Psoas muscle (tissue), 8 donors: ENCODE measurements at regions of chr7 and their contacts with region 1.

Region 1: GRCh38 chr7:124042816-124043215 is 9.9 kb upstream of the TMEM229A start:
- DNase-seq: no peak
- ATAC-seq: no peak
- H3K4me3 ChIP-seq: no peak overlapping the region
- H3K27ac ChIP-seq: no peak overlapping the region
- H3K4me1 ChIP-seq: no peaks in the 10 kb centered on the region
- H3K27me3 ChIP-seq: peaks cover 0 to 3% (median 0%) of the 10 kb centered on the region in 3 donors
- CTCF ChIP-seq: no peak

Region 2: DNA sequence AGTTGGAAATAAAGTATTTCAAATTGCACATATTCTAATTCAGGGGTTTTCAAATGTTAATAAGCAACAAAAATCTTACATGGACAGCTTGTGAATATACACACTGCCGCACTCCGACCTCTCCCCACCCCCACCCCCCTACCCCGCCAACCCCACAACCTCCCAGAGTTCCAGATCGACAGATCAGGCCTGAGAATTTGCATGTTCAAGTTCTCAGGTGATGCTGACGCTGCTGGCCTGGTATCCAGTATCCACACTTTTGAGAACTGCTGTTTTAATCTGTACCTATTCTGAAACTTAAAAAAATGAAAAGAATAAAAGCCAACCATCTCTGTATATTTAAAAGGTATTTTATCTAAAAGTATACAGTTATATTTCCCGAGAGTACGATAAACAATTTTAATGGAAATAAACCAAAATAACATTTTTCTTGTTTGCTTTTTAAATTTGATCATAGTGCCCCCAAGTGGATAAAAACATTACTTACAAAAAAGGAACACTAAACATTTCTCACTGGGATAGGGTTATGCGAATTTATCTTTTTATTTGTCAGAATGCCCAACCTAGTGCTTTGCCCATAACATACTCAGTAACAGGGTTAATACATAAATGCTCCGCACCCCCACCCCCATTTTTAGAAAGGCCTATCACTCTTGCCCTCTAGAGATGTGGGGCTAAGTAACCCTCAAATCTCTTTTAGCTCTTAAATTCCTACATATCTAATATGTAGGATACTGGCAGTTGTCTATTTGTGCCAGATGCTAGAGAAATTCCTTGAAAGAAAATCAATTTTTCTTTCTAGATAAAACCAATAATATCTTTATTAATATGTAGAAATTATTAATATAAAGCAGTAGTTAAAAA is 1510.2 kb before region 1 on chr7:
- intact Hi-C with region 1: no loop called
- DNase-seq: no peak
- ATAC-seq: no peak
- H3K4me3 ChIP-seq: no peak overlapping the region
- H3K27ac ChIP-seq: no peak overlapping the region
- H3K4me1 ChIP-seq: no peaks in the 10 kb centered on the region
- H3K27me3 ChIP-seq: no peaks in the 10 kb centered on the region
- CTCF ChIP-seq: no peak

Region 3: DNA sequence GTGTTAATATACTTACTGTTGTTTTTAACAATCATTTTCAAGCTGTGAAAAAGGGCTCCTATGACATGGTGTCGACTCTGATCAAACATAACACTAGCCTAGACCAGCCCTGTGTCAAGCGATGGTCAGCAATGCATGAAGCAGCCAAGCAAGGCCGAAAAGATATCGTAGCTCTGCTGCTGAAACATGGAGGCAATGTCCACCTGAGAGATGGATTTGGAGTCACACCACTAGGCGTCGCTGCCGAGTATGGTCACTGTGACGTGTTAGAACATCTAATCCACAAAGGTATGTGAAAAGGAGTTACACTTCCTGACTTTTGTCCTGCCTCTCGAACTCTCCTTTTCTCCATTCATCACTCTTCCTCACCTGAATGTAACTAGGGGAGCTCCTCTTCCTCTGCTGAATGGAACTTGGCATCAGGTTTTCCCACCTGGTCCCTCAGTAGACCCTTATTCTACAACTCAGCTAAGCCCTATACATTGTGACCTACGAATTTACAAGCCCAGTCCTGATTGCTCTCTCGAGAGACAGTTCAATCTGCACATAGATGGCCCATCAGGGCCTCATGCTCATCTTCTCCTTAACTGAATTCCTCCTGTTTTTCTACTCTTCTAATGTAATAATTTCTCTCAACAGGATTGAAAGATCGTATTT is 418.2 kb before region 1 on chr7:
- intact Hi-C with region 1: no loop called
- DNase-seq: peak in 1 of 2 donors; percentile 63
- ATAC-seq: no peak
- H3K4me3 ChIP-seq: no peak overlapping the region
- H3K27ac ChIP-seq: peak overlapping the region; percentile 90
- H3K4me1 ChIP-seq: peaks cover 33% of the 10 kb centered on the region
- H3K27me3 ChIP-seq: no peaks in the 10 kb centered on the region
- CTCF ChIP-seq: peak; percentile 54

Region 4: GRCh38 chr7:124088590-124088989 is 45.8 kb after region 1 on chr7:
- intact Hi-C with region 1: loop called in 1 of 2 experiments (anchors 2 kb)
- DNase-seq: no peak
- ATAC-seq: no peak
- H3K4me3 ChIP-seq: no peak overlapping the region
- H3K27ac ChIP-seq: no peak overlapping the region
- H3K4me1 ChIP-seq: no peaks in the 10 kb centered on the region
- H3K27me3 ChIP-seq: no peaks in the 10 kb centered on the region
- CTCF ChIP-seq: no peak